A549 (cell line): ENCODE measurements at regions of chr12 and their contacts with region 1.

Region 1: DNA sequence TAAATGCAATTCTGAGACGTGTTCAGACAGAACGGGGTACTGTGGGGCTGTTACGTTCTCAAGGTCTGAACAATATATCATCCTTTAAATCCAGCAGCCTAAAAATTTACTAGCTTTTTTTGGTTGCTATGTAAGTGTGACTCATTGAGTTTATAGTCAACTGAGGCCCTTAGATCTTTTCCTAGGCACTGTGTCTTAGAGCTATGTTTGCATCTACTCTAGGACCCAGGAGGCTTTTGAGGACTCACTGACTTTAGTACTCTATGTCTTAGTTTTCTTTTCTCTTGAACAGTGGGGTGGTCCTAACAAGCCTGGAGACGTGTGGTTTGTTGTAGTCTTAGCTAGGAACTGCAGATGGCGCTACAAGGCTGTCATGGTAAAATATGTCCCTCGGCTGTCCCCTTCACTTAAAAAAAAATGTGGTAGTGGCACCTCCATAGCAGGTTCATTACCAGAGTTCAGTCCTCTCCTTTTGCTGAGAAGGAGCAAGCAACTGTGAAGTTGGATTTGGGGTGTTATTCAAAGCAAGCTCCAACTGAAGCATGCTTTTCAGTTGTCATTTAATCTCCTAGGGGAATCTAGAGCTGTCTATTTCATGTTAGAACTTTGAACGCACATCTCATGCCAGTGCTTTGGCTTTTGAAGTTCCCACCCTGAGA is 8.7 kb upstream of the SPATS2 start:
- DNase-seq: peak; percentile 80 to 84
- ATAC-seq: peak; percentile 87 to 92
- H3K4me3 ChIP-seq: no peak overlapping the region
- H3K27ac ChIP-seq: peak overlapping the region; percentile 52 to 65; a peak in 5 of 6 replicates
- H3K4me1 ChIP-seq: peaks cover 28% of the 10 kb centered on the region
- CTCF ChIP-seq: peak; percentile 96
- EP300 ChIP-seq: no peak
- POLR2A ChIP-seq: no peak
- RAD21 ChIP-seq: peak; percentile 96 to 98

Region 2: DNA sequence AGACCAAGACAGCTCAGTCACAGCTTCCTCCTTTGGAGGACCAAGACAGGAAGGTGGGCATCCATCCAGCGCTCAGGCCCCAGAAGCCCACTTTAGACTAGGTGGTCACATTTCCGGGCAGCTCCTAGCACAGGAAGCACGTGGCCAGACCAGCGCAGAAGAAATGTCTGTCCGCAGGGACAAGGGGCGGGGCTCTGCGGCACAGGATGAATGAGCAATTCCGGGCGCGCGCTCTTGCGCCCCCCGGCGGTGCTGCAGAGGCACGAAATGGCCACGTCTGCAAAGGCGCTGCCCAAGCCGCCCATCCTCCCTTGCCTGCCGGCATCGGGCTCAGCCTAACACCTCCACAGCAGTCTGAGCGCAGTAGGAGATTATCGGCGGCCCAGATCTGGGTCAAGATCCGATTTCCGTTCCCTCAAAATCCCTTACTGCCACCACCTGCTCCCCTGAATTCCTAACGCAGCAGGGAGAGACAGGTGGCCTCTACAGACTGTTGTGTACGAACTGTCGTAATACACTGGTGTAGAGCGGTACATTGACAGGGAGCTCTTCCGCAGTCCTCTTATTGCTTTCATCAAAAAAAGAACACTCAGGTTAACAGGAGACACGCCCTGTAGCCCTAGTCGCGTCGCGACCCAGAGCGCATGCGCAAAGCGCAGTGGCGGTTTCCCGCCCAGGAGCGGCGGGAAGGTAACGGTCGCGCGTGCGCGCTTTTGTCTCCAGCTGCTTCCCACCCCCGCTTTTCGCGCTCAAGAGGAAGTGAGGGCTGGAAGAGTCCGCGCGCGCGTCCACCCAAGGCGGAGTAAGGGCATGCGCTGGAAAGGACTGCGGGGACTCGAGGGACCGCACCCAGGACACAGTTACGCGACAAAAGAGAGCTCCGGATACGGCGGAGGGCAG is 228.2 kb before region 1 on chr12:
- CTCF ChIA-PET with region 1: no interaction called
- POLR2A ChIA-PET with region 1: no interaction called
- DNase-seq: peak; percentile 84 to 96
- ATAC-seq: peak; percentile 74 to 80
- H3K4me3 ChIP-seq: peak overlapping the region; percentile 93
- H3K27ac ChIP-seq: peak overlapping the region; percentile 99
- H3K4me1 ChIP-seq: peaks cover 27% of the 10 kb centered on the region
- CTCF ChIP-seq: peak; percentile 90
- EP300 ChIP-seq: no peak
- POLR2A ChIP-seq: peak; percentile 44
- RAD21 ChIP-seq: peak; percentile 22 to 62

Region 3: DNA sequence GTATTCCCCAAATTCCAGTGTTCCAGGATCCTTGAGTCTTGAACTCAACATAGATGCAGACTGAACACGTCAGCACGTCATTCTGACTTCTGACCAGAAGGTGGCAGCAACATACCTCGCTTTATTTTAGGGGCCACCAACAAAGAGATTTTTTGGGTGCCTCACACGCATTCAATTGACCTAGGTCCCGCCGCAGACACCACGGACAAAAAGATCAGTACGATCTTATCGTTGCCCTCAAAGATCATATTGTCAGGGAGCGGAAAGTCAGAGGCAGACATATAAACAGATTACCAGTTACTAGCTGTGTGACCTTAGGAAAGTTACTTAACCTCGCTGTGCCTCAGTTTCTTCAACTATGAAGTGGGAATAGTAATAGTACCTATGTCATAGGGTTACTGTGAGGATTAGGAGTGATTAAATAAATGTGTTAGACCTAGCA is 70.2 kb before region 1 on chr12:
- CTCF ChIA-PET with region 1: interaction called, 29 read pairs
- POLR2A ChIA-PET with region 1: no interaction called
- DNase-seq: peak; percentile 66 to 70
- ATAC-seq: peak; percentile 47 to 66; a peak in 4 of 6 replicates
- H3K4me3 ChIP-seq: no peak overlapping the region
- H3K27ac ChIP-seq: no peak overlapping the region
- H3K4me1 ChIP-seq: 0 out of 3 replicates have a peak, but pooled peaks cover 12% of the 10 kb centered on the region
- CTCF ChIP-seq: peak; percentile 96
- EP300 ChIP-seq: no peak
- POLR2A ChIP-seq: no peak
- RAD21 ChIP-seq: peak; percentile 89 to 91

Region 4: GRCh38 chr12:49336645-49337584 is 21.7 kb before region 1 on chr12 and contains the start of gene C1QL4:
- CTCF ChIA-PET with region 1: interaction called, 104 read pairs
- POLR2A ChIA-PET with region 1: interaction called, 3 read pairs
- DNase-seq: peak; percentile 75 to 84
- ATAC-seq: peak; percentile 78 to 88
- H3K4me3 ChIP-seq: peak within 1 kb of the TSS; percentile 64
- H3K27ac ChIP-seq: peak within 1 kb of the TSS; percentile 71 to 82
- H3K4me1 ChIP-seq: peaks cover 12% of the 10 kb centered on the region; the same call in 2 of the 3 replicates
- CTCF ChIP-seq: peak; percentile 95
- EP300 ChIP-seq: no peak
- POLR2A ChIP-seq: peak; percentile 62
- RAD21 ChIP-seq: peak; percentile 28 to 53
- polyA plus RNA-seq, gene C1QL4: 0.99 and 1.5 TPM in 2 replicates

Region 5: GRCh38 chr12:49403971-49404450 is 45.4 kb after region 1 on chr12:
- CTCF ChIA-PET with region 1: interaction called, 52 read pairs
- POLR2A ChIA-PET with region 1: no interaction called
- DNase-seq: no peak
- ATAC-seq: no peak
- H3K4me3 ChIP-seq: no peak overlapping the region
- H3K27ac ChIP-seq: no peak overlapping the region
- H3K4me1 ChIP-seq: peaks cover 44% of the 10 kb centered on the region
- CTCF ChIP-seq: no peak
- EP300 ChIP-seq: no peak
- POLR2A ChIP-seq: no peak
- RAD21 ChIP-seq: no peak

Region 6: GRCh38 chr12:49496417-49497360 is 138.1 kb after region 1 on chr12:
- CTCF ChIA-PET with region 1: interaction called, 19 read pairs
- POLR2A ChIA-PET with region 1: no interaction called
- DNase-seq: peak in 1 of 2 experiments; percentile 57
- ATAC-seq: peak; percentile 78 to 82; a peak in 5 of 6 replicates
- H3K4me3 ChIP-seq: peak overlapping the region; percentile 17; the same call in 2 of the 3 replicates
- H3K27ac ChIP-seq: peak overlapping the region; percentile 74 to 81
- H3K4me1 ChIP-seq: peaks cover 39% of the 10 kb centered on the region
- CTCF ChIP-seq: no peak
- EP300 ChIP-seq: 0 out of 5 replicates have a peak, but pooled peaks have one; percentile 0 to 30
- POLR2A ChIP-seq: no peak
- RAD21 ChIP-seq: no peak

Region 7: DNA sequence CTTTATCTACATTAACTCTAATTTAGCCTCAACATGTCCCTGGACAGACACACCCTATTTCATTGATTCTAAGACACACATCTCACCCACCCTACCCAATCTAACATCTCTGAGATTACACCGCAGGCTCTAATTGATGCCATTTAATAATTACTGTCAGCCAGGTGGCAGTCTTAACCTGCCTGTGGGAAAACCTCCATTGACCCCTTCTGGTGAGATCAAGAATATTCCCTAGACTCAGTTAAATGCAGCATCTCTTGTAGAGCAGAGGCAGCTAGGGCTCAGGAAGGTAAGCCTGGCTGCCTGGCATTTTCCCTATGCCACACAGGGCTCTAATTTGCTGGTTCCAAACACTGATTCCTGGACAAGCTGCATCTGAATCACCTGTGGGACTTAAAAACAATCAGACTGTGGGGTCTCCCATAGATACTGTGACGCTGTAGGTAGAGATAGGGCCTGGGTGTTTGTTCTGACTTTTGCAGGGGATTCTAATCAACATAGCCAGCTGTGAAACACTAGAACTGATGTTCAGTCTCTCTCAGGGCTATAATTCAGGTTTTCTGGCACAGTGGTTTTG is 195.0 kb after region 1 on chr12:
- CTCF ChIA-PET with region 1: interaction called, 39 read pairs
- POLR2A ChIA-PET with region 1: interaction called, 5 read pairs
- DNase-seq: peak; percentile 68 to 71
- ATAC-seq: peak; percentile 58 to 75
- H3K4me3 ChIP-seq: no peak overlapping the region
- H3K27ac ChIP-seq: no peak overlapping the region
- H3K4me1 ChIP-seq: no peaks in the 10 kb centered on the region
- CTCF ChIP-seq: peak; percentile 72
- EP300 ChIP-seq: no peak
- POLR2A ChIP-seq: no peak
- RAD21 ChIP-seq: peak; percentile 72 to 87